ENCODE measurements at regions of chr17 and their contacts with region 1.

Region 1: GRCh38 chr17:40559954-40560591 is 5.2 kb downstream of the CCR7 start:
- DNase-seq: peak; percentile 78
- CTCF ChIP-seq: peak; percentile 96

Region 2: GRCh38 chr17:40362696-40363110 is 197.4 kb before region 1 on chr17:
- CTCF ChIA-PET with region 1: interaction called, 11 read pairs
- POLR2A ChIA-PET with region 1: no interaction called
- DNase-seq: peak; percentile 92
- CTCF ChIP-seq: peak; percentile 90

Region 3: GRCh38 chr17:40417609-40418427 is 142.3 kb before region 1 on chr17 and contains the start of gene TOP2A:
- CTCF ChIA-PET with region 1: interaction called, 12 read pairs
- POLR2A ChIA-PET with region 1: interaction called, 3 read pairs
- DNase-seq: peak; percentile 100
- CTCF ChIP-seq: no peak

Region 4: GRCh38 chr17:40475234-40475908 is 84.7 kb before region 1 on chr17:
- CTCF ChIA-PET with region 1: interaction called, 12 read pairs
- POLR2A ChIA-PET with region 1: interaction called, 5 read pairs
- DNase-seq: no peak
- CTCF ChIP-seq: no peak

Region 5: DNA sequence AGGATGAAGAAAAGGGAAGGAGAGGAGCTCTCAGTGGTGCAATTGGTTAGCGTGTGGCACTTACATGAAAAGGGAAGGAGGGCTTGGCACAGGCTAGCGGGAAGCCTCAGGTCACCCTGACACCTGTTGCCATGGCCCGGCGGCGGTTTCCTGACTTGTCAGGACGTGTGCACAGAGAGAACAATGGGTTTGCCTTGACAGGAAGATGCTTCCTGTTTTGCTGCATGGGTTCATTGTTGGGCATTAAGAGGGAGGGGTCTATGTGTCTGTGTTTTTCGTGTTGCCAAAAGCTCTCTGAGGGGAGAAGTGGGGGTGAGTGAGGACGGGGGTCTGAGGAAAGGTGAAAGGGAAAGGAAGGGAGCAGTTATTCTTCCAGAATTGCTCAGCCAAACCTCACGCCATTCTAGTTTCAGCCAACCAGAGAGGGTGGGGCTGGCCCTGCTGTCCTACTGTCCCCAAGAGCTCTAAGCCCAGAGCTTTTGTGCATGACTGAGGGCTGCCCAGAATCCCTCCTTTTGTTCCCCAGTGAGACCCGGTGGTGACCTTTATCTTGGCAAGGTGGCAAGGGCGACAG is 22.3 kb after region 1 on chr17:
- CTCF ChIA-PET with region 1: interaction called, 47 read pairs
- POLR2A ChIA-PET with region 1: interaction called, 8 read pairs
- DNase-seq: peak; percentile 64
- CTCF ChIP-seq: no peak

Region 6: GRCh38 chr17:40598663-40599467 is 38.8 kb after region 1 on chr17:
- CTCF ChIA-PET with region 1: interaction called, 53 read pairs
- POLR2A ChIA-PET with region 1: interaction called, 17 read pairs
- DNase-seq: peak; percentile 74
- CTCF ChIP-seq: no peak

Region 7: DNA sequence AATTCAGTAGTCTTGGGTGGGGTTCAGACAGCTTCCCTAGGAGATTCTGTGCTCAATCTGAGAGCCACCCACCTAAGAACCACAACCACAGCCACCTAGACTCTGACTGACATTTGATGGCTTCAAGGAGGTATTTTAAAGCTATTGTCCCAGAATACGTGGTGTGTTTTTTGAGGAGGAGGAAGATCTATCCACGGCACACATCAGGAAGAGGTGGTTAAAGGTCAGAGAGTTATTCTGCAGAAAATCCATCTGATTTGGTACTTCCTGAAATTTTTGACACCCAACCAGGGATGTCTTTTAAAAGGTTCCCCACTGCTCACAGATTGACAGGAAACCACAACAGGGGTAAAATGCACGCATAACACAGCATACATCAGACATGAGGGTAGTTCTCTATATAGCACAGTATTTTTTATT is 62.4 kb after region 1 on chr17:
- CTCF ChIA-PET with region 1: interaction called, 127 read pairs
- POLR2A ChIA-PET with region 1: interaction called, 7 read pairs
- DNase-seq: no peak
- CTCF ChIP-seq: no peak

Region 8: DNA sequence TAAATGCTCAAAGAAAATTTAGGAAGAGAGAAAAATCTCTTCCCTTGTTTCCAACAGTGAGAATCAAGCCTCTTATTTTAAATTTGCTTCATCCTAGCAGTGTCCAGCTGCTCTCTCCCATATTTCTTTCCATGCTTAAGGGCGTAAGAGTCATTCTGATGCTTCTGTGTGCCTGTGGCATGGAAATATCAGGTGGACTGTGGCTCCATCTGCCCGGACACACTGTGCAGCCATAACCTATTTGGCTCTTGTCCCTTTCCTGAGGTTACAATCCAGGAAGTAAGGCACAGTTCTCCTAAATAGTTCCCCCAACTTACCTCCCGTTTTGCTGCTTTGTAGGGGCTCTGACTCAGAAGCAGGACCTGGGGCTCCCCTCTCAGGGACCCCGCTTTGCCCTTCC is 111.2 kb after region 1 on chr17:
- CTCF ChIA-PET with region 1: no interaction called
- POLR2A ChIA-PET with region 1: no interaction called
- DNase-seq: no peak
- CTCF ChIP-seq: no peak

Measured in GM10248 (cell line).